WTC11 (cell line): ENCODE measurements at regions of chr22 and their contacts with region 1.

Region 1: DNA sequence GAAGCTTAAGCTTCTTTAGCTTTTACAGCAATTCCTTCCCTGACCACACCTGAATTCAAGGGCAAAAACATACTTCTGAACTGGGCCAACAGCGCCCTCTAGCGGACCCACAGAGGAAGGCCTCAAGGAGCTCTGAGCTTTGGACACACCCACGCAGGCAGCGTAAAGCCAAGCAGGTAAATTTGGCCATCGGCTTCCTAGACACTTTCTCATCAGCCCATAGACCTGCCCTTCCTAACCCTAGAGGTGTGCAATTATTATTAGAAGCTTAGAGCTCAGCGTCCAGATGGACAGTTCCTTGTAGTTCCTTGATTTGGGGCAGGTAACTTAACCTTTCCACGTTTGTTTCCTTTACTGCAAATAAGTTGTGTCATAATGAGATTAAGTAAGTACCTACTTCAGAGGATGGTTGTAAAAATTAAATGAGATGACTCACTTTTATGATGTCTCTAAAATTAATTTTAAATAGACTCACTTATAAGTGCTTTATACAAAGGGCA is 25.7 kb upstream of the HMGXB4 start:
- DNase-seq: peak; percentile 85
- ATAC-seq: peak; percentile 95
- H3K4me3 Mint-ChIP-seq: no peak overlapping the region
- H3K27ac Mint-ChIP-seq: no peak overlapping the region
- H3K4me1 Mint-ChIP-seq: peaks cover 31% of the 10 kb centered on the region
- H3K27me3 Mint-ChIP-seq: peaks cover 21% of the 10 kb centered on the region
- CTCF ChIP-seq: peak; percentile 99

Region 2: DNA sequence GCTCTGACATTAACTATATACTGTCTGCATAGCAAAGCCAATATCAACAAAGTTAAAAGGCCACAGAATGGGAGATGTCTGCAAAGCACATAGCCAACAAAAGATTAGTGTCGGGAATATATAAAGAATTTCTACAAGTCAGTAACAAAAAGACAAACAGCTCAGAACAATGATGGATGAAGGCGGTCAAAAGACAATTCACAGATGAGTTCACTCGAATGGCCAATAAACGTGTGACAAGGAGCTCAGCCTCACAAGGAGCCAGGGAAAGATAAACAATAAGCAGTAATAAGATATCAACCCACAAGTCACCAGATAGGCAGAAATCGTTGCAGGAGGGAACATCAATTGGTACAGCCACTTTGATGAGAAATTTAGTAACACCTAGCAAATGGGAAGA is 271.6 kb before region 1 on chr22:
- CTCF ChIA-PET with region 1: no interaction called
- POLR2A ChIA-PET with region 1: no interaction called
- DNase-seq: no peak
- ATAC-seq: no peak
- H3K4me3 Mint-ChIP-seq: no peak overlapping the region
- H3K27ac Mint-ChIP-seq: no peak overlapping the region
- H3K4me1 Mint-ChIP-seq: no peaks in the 10 kb centered on the region
- H3K27me3 Mint-ChIP-seq: no peaks in the 10 kb centered on the region; the same call in 1 of the 2 replicates
- CTCF ChIP-seq: no peak

Region 3: GRCh38 chr22:35043252-35043931 is 188.2 kb before region 1 on chr22:
- CTCF ChIA-PET with region 1: interaction called, 42 read pairs
- POLR2A ChIA-PET with region 1: no interaction called
- DNase-seq: peak; percentile 44
- ATAC-seq: peak; percentile 79
- H3K4me3 Mint-ChIP-seq: no peak overlapping the region
- H3K27ac Mint-ChIP-seq: no peak overlapping the region
- H3K4me1 Mint-ChIP-seq: peaks cover 14% of the 10 kb centered on the region
- H3K27me3 Mint-ChIP-seq: peaks cover 2% of the 10 kb centered on the region; the same call in 1 of the 2 replicates
- CTCF ChIP-seq: no peak

Region 4: DNA sequence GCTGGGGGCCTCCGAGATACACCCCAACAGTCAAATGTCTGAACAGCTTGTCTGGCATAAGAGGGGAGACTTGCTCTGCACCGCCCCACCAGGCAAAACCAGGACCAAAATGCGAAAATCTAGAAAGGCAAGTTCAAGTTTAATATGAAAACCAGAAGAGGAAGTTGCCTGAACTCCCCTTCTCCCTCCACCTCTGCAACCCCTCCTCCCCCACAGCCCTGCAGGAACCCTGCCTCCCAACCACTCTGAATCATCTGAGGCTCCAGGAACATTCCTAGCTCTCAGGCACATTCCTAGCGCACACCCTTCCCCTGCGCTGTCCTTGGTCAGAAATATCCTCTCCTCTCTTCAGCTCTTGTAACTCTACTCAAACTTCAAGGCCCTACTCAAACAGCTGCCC is 129.0 kb before region 1 on chr22:
- CTCF ChIA-PET with region 1: no interaction called
- POLR2A ChIA-PET with region 1: no interaction called
- DNase-seq: peak; percentile 67
- ATAC-seq: peak; percentile 93
- H3K4me3 Mint-ChIP-seq: no peak overlapping the region
- H3K27ac Mint-ChIP-seq: no peak overlapping the region
- H3K4me1 Mint-ChIP-seq: peaks cover 7% of the 10 kb centered on the region; the same call in 1 of the 2 replicates
- H3K27me3 Mint-ChIP-seq: peaks cover 17% of the 10 kb centered on the region
- CTCF ChIP-seq: no peak

Region 5: GRCh38 chr22:35150183-35151107 is 81.2 kb before region 1 on chr22:
- CTCF ChIA-PET with region 1: interaction called, 72 read pairs
- POLR2A ChIA-PET with region 1: no interaction called
- DNase-seq: peak; percentile 89
- ATAC-seq: peak; percentile 54
- H3K4me3 Mint-ChIP-seq: no peak overlapping the region
- H3K27ac Mint-ChIP-seq: no peak overlapping the region
- H3K4me1 Mint-ChIP-seq: peaks cover 35% of the 10 kb centered on the region
- H3K27me3 Mint-ChIP-seq: peaks cover 23% of the 10 kb centered on the region
- CTCF ChIP-seq: peak; percentile 82

Region 6: DNA sequence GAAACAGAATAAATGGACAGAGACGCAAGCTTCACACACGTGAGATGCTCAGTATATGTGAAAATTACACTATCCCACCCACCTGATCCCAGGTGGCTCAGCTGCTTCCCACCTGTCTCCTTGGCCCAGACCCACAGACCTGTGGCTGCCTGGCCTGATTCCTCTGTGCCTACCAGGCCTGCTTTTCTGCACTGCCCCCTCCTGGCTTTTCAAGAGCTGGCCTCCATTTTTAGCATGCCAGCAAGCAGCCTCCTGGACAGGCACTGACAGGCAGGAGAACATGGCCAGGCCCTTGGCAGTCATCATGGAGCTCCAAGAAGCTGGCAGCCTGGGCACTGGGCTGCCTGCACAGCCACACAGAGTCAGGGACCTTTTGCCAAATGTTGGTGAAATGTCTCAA is 53.8 kb before region 1 on chr22:
- CTCF ChIA-PET with region 1: interaction called, 27 read pairs
- POLR2A ChIA-PET with region 1: no interaction called
- DNase-seq: peak; percentile 50
- ATAC-seq: peak; percentile 83
- H3K4me3 Mint-ChIP-seq: no peak overlapping the region
- H3K27ac Mint-ChIP-seq: no peak overlapping the region
- H3K4me1 Mint-ChIP-seq: no peaks in the 10 kb centered on the region
- H3K27me3 Mint-ChIP-seq: peaks cover 11% of the 10 kb centered on the region
- CTCF ChIP-seq: no peak

Region 7: DNA sequence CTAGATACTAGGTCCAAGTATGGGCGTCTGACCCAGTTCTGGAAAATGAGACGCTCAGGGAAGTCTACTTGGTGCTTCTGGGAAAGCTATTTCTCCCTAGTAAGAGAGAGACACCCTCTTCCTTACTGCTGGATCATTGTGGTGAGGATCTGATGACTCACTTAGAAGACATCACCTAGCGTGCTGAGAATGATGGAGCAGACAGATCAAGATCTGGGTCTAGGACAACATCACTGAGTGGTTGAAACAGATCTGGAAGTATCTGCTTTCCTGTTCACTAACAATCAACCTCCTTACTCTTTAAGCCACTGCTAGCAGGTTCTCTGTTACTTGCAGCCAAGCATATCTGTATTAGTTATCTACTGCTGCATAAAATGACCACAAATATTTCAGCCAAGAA is 12.6 kb before region 1 on chr22:
- CTCF ChIA-PET with region 1: interaction called, 30 read pairs
- POLR2A ChIA-PET with region 1: no interaction called
- DNase-seq: no peak
- ATAC-seq: no peak
- H3K4me3 Mint-ChIP-seq: no peak overlapping the region
- H3K27ac Mint-ChIP-seq: no peak overlapping the region
- H3K4me1 Mint-ChIP-seq: no peaks in the 10 kb centered on the region
- H3K27me3 Mint-ChIP-seq: no peaks in the 10 kb centered on the region; the same call in none of the 2 replicates
- CTCF ChIP-seq: no peak

Region 8: DNA sequence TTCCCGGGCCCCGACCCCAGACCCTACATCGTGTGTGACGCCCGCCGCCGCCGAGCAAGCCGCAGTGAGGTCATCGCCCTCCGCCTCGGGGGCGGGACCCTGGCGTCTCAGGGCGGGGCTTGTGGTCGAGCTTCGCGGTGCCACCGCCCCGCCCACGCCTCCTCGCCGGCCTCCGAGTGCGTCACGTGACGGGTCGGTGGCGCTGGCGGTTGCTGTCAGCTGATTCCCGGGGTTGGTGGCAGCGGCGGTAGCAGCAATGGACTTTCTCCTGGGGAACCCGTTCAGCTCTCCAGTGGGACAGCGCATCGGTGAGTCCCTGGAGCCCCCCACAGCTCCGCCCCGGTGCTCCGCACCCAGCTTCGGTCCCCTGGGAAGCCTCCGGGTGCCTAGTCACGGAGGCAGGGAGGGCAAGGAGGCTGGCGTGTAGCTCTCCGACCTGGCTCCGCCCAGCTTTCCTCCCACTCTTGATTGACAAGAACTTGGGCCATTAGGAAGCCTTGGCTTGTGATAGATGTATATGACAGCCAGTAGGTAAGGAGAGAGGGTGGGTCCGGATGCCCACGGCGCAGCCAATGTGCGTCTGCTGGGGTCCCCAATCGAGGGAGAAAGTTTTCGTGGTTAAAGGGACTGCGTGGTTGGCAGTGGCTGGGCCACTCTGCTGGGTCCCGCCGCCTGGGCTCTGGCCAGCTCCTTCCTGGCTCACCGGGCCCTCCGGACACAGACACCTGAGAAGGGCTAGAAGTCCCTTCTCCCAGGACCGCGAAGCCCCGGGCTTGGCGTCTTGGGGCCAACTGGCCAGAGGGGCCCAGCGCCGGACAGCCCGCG is 68.2 kb after region 1 on chr22 and contains the start of gene TOM1:
- CTCF ChIA-PET with region 1: interaction called, 12 read pairs
- POLR2A ChIA-PET with region 1: no interaction called
- DNase-seq: peak; percentile 98
- ATAC-seq: peak; percentile 95
- H3K4me3 Mint-ChIP-seq: peak within 1 kb of the TSS; percentile 81
- H3K27ac Mint-ChIP-seq: peak within 1 kb of the TSS; percentile 99
- H3K4me1 Mint-ChIP-seq: peaks cover 5% of the 10 kb centered on the region
- H3K27me3 Mint-ChIP-seq: no peaks in the 10 kb centered on the region
- CTCF ChIP-seq: no peak
- total RNA-seq, gene TOM1: 23.5 to 25.7 TPM (median 25.4 TPM) in 3 replicates